K562 (cell line): ENCODE measurements at regions of chr6 and their contacts with region 1.

Region 1: GRCh38 chr6:36678518-36679027 is at the start of gene CDKN1A:
- DNase-seq: peak; percentile 89 to 91 (median 90)
- ATAC-seq: peak; percentile 90
- H3K4me3 ChIP-seq: peak within 1 kb of the TSS; percentile 50
- H3K27ac ChIP-seq: peak within 1 kb of the TSS; percentile 68; the same call in 1 of the 3 replicates
- H3K4me1 ChIP-seq: peaks cover 33 to 35% of the 10 kb centered on the region in 2 experiments
- H3K27me3 ChIP-seq: peaks cover 23 to 36% of the 10 kb centered on the region in 2 experiments
- CTCF ChIP-seq: 0 out of 6 replicates have a peak, but pooled peaks of 1 of the 3 experiments have one; percentile 5
- EP300 ChIP-seq: no peak
- POLR2A ChIP-seq: no peak; the same call in 1 of the 2 replicates
- RAD21 ChIP-seq: 0 out of 4 replicates have a peak, but pooled peaks of 1 of the 2 experiments have one; percentile 7
- polyA plus RNA-seq, gene CDKN1A: 0.25 to 0.49 TPM

Region 2: DNA sequence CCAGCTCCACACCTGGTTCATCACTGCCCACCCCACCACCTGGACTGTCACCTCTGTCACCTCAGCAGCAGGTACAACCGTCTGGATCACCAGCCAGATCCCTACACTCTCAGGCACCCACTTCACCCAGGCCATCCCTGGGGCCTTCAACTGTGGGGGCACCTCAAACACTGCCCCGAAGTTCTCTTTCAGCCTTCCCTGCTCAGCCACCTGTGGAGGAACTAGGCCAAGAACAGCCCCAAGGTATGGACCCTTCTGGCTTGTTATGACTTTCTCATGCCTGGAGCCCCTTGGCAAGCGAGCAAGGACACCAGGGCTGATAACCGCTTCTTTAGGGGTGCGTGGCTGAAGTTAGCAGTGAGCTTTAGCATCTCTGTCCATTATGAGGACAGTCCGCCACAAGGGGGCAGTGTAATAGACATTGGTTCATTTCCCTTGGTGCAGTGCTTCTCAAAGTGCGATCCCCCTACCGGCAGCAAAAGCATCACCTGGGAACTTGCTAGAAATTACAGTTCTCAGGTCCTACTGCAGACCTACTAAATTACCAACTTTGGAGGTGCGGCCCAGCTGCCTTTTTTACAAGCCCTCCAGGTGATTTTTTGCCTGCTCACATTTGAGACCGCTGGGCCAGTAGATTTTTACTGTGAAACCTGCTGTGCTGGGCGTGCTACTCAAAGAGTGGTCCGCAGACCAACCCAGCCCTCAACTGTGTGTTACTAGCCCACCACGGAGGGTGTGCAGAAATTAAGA is 376.2 kb before region 1 on chr6:
- CTCF ChIA-PET with region 1: interaction called, 10 read pairs
- POLR2A ChIA-PET with region 1: no interaction called
- in situ Hi-C with region 1: no loop called
- intact Hi-C with region 1: no loop called
- DNase-seq: peak; percentile 85 to 97 (median 88)
- ATAC-seq: peak; percentile 98
- H3K4me3 ChIP-seq: no peak overlapping the region
- H3K27ac ChIP-seq: no peak overlapping the region
- H3K4me1 ChIP-seq: no peaks in the 10 kb centered on the region
- H3K27me3 ChIP-seq: peaks cover 35 to 57% of the 10 kb centered on the region in 2 experiments
- CTCF ChIP-seq: peak; percentile 99
- EP300 ChIP-seq: peak; percentile 24; the same call in 1 of the 2 replicates
- POLR2A ChIP-seq: no peak
- RAD21 ChIP-seq: peak; percentile 84 to 92

Region 3: DNA sequence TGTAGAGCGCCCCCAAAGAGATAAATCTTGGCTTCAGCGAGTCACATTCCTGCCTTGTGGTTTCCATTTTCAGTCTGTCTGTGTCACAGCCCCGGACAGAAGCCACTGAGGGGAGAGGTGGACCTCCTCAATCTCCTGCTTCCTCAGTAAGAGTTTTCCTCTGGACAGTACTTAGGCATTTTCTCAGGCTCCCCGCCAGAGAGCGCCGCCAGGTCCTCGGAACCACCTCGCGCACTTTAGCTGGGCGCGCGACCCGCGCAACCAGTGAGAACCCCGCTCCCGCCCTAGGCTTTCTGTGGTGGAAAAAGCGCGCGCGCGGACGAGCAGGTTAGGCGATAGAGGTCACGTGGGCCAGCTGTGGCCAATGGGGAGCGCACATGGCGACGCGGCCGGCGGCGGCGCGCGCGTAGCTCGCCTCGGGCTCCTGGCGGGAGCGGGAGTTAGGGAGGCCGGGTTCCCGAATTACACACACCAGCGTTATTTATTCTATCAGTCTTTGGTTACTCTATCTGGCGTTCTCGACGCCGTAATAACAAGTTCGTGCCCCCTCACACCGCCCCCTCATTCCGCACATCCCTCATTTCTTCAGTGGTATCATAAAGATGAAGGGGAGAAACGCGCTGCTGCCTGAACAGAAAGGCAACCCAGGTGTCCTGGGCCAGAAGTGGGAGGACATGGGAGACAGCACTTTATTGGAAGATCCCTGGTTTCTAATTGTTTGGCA is 255.3 kb before region 1 on chr6:
- CTCF ChIA-PET with region 1: interaction called, 3 read pairs
- POLR2A ChIA-PET with region 1: no interaction called
- in situ Hi-C with region 1: no loop called
- intact Hi-C with region 1: loop called (anchors 10 kb)
- DNase-seq: peak; percentile 99 to 100 (median 100)
- ATAC-seq: peak; percentile 96
- H3K4me3 ChIP-seq: peak overlapping the region; percentile 32
- H3K27ac ChIP-seq: peak overlapping the region; percentile 75
- H3K4me1 ChIP-seq: peaks cover 13 to 15% of the 10 kb centered on the region in 2 experiments; a peak in 4 of 5 replicates
- H3K27me3 ChIP-seq: no peaks in the 10 kb centered on the region
- CTCF ChIP-seq: peak; percentile 90 to 95 (median 94)
- EP300 ChIP-seq: peak; percentile 49
- POLR2A ChIP-seq: peak; percentile 90
- RAD21 ChIP-seq: peak; percentile 96 to 98

Region 4: DNA sequence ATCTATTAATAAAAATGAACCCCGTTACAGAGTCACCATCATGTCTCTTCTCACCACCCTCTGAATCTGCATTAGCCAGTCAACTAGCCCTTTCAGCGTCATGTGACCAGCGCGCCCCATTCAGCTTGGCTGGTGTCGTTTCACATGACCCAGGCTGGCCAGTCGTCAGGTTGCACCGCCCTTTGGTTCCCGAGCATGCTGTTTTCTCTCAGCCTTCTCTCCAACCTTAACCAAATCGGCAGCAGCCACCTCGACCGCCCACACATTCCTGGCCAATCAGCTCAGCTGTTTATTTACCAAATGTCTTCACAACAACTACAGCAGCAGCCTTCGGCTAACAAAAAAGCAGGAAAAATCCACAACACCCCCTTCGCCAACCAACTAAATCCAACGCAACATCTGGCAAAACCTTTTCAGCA is 78.8 kb before region 1 on chr6:
- CTCF ChIA-PET with region 1: no interaction called
- POLR2A ChIA-PET with region 1: interaction called, 10 read pairs
- in situ Hi-C with region 1: no loop called
- intact Hi-C with region 1: no loop called
- DNase-seq: peak in 2 of 4 experiments; percentile 67 to 70
- ATAC-seq: no peak
- H3K4me3 ChIP-seq: no peak overlapping the region
- H3K27ac ChIP-seq: no peak overlapping the region
- H3K4me1 ChIP-seq: peaks cover 13 to 33% of the 10 kb centered on the region in 2 experiments; a peak in 4 of 5 replicates
- H3K27me3 ChIP-seq: no peaks in the 10 kb centered on the region
- CTCF ChIP-seq: no peak
- EP300 ChIP-seq: no peak
- POLR2A ChIP-seq: no peak
- RAD21 ChIP-seq: no peak

Region 5: DNA sequence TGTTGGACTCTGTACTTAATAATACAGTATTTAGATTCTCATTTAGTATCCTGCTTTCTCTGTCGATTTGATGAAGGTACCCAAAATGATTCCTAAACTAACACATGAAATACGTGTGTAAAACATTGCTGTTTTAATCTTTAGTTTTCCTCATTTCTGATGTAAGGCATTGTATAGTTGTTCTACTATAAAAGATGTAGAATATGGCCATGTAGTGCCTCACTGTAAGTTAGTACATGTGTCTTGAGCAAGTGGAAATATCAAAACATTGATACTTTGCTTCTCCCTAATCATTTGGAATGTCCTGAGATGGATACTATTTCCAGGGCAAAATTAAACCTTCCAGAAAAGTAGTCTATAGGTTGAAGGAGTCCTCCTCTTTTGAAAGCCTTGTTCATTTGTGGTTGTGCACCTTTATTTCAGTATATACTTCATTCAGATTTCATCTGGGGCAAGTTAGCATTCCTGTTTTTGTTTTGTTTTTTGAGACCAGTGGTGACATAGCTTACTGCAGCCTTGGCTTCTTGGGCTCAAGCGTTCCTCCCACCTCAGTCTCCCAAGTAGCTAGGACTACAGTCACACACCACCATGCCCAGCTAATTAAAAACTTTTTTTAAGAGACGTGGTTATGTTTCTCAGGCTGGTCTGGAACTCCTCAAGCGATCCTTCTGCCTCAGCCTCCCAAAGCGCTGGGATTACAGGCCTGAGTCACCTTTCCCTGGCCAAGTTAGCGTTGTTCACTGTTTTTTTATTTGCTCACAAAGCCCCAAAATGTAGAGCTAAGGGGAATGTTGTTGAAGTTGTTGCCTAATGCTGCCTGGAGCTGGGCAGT is 72.8 kb before region 1 on chr6:
- CTCF ChIA-PET with region 1: no interaction called
- POLR2A ChIA-PET with region 1: interaction called, 16 read pairs
- in situ Hi-C with region 1: no loop called
- intact Hi-C with region 1: no loop called
- DNase-seq: no peak
- ATAC-seq: peak; percentile 21
- H3K4me3 ChIP-seq: no peak overlapping the region
- H3K27ac ChIP-seq: peak overlapping the region; percentile 3; the same call in 1 of the 3 replicates
- H3K4me1 ChIP-seq: no peaks in the 10 kb centered on the region; a peak in 1 of 5 replicates
- H3K27me3 ChIP-seq: no peaks in the 10 kb centered on the region
- CTCF ChIP-seq: no peak
- EP300 ChIP-seq: no peak
- POLR2A ChIP-seq: peak; percentile 42
- RAD21 ChIP-seq: no peak

Region 6: GRCh38 chr6:36615018-36615761 is 63.4 kb before region 1 on chr6:
- CTCF ChIA-PET with region 1: interaction called, 27 read pairs
- POLR2A ChIA-PET with region 1: interaction called, 16 read pairs
- in situ Hi-C with region 1: loop called (anchors 5 kb)
- intact Hi-C with region 1: loop called (anchors 2 kb)
- DNase-seq: peak; percentile 65 to 75 (median 68)
- ATAC-seq: peak; percentile 76
- H3K4me3 ChIP-seq: no peak overlapping the region
- H3K27ac ChIP-seq: no peak overlapping the region
- H3K4me1 ChIP-seq: peaks cover 6 to 9% of the 10 kb centered on the region in 2 experiments; a peak in 3 of 5 replicates
- H3K27me3 ChIP-seq: no peaks in the 10 kb centered on the region; a peak in 1 of 5 replicates
- CTCF ChIP-seq: peak; percentile 81 to 97 (median 92)
- EP300 ChIP-seq: no peak; the same call in 1 of the 2 replicates
- POLR2A ChIP-seq: no peak
- RAD21 ChIP-seq: peak; percentile 82 to 92

Region 7: DNA sequence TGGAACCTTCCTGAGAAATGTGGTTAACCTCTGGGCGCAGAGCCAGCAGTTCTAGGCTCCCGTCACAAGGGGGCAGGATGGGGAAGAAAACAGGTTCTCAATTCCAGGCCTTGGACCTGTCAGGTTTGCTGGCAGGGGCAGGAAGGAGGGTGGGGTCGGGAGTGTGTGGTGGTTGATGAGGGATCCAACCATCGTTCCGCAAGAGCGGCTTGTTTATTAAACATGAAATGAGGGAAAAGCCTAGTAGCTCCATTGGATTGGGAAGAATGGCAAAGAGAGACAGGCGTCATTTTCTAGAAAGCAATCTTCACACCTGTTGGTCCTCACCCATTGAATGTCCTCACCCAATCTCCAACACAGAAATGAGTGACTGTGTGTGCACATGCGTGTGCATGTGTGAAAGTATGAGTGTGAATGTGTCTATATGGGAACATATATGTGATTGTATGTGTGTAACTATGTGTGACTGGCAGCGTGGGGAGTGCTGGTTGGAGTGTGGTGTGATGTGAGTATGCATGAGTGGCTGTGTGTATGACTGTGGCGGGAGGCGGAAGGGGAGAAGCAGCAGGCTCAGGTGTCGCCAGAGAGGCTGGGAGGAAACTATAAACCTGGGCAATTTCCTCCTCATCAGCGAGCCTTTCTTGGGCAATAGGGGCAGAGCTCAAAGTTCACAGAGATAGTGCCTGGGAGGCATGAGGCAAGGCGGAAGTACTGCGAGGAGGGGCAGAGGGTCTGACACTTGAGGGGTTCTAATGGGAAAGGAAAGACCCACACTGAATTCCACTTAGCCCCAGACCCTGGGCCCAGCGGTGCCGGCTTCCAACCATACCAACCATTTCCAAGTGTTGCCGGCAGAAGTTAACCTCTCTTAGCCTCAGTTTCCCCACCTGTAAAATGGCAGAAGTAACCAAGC is 54.8 kb before region 1 on chr6:
- CTCF ChIA-PET with region 1: interaction called, 24 read pairs
- POLR2A ChIA-PET with region 1: interaction called, 3 read pairs
- in situ Hi-C with region 1: loop called (anchors 5 kb)
- intact Hi-C with region 1: loop called (anchors 1 kb)
- DNase-seq: peak; percentile 86 to 91 (median 88)
- ATAC-seq: peak; percentile 95
- H3K4me3 ChIP-seq: no peak overlapping the region
- H3K27ac ChIP-seq: no peak overlapping the region
- H3K4me1 ChIP-seq: peaks cover 0 to 4% of the 10 kb centered on the region in 2 experiments; a peak in 2 of 5 replicates
- H3K27me3 ChIP-seq: peaks cover 2 to 23% of the 10 kb centered on the region in 2 experiments; a peak in 3 of 5 replicates
- CTCF ChIP-seq: peak; percentile 95 to 97 (median 97)
- EP300 ChIP-seq: no peak
- POLR2A ChIP-seq: no peak
- RAD21 ChIP-seq: peak; percentile 97 to 99

Region 8: GRCh38 chr6:37919417-37920157 is 1241.0 kb after region 1 on chr6:
- CTCF ChIA-PET with region 1: no interaction called
- POLR2A ChIA-PET with region 1: no interaction called
- in situ Hi-C with region 1: no loop called
- intact Hi-C with region 1: no loop called
- DNase-seq: no peak
- ATAC-seq: no peak
- H3K4me3 ChIP-seq: no peak overlapping the region
- H3K27ac ChIP-seq: no peak overlapping the region
- H3K4me1 ChIP-seq: no peaks in the 10 kb centered on the region
- H3K27me3 ChIP-seq: no peaks in the 10 kb centered on the region
- CTCF ChIP-seq: no peak
- EP300 ChIP-seq: no peak
- POLR2A ChIP-seq: no peak
- RAD21 ChIP-seq: no peak